ENCODE measurements at regions of chr12 and their contacts with region 1.

Region 1: GRCh38 chr12:31536672-31537071 is 54.3 kb downstream of the DENND5B start:
- DNase-seq: no peak
- ATAC-seq: no peak
- H3K4me3 ChIP-seq: no peak overlapping the region
- H3K4me3 Mint-ChIP-seq: no peak overlapping the region
- H3K27ac ChIP-seq: no peak overlapping the region
- H3K27ac Mint-ChIP-seq: no peak overlapping the region
- H3K4me1 ChIP-seq: peaks cover 12 to 14% of the 10 kb centered on the region in 2 donors
- H3K4me1 Mint-ChIP-seq: peaks cover 78% of the 10 kb centered on the region
- H3K27me3 ChIP-seq: no peaks in the 10 kb centered on the region
- H3K27me3 Mint-ChIP-seq: no peaks in the 10 kb centered on the region
- CTCF ChIP-seq: no peak

Region 2: DNA sequence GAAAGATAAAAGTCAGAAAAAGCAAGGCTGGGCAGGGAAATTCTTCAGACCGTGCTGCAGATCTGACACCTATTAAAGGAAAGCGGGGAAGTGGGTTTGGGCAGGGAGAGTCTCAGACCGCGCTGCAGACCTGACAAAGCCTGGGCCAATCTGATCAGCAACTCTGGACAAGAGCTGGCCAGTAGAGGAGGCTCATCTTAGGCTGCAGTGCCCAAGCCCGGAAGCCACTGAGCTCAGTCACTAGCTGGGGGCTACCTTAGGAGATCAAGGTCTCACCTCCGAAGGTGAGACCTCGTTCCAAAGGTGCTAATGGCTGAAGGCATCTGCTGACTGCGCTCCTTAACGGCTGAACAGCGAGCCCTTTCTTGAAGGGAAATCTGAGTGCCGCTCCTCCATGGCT is 270.9 kb before region 1 on chr12:
- CTCF ChIA-PET with region 1: no interaction called
- POLR2A ChIA-PET with region 1: no interaction called
- intact Hi-C with region 1: no loop called
- DNase-seq: no peak
- ATAC-seq: no peak
- H3K4me3 ChIP-seq: no peak overlapping the region
- H3K4me3 Mint-ChIP-seq: no peak overlapping the region
- H3K27ac ChIP-seq: no peak overlapping the region
- H3K27ac Mint-ChIP-seq: no peak overlapping the region
- H3K4me1 ChIP-seq: no peaks in the 10 kb centered on the region
- H3K4me1 Mint-ChIP-seq: no peaks in the 10 kb centered on the region
- H3K27me3 ChIP-seq: no peaks in the 10 kb centered on the region
- H3K27me3 Mint-ChIP-seq: no peaks in the 10 kb centered on the region
- CTCF ChIP-seq: no peak

Region 3: DNA sequence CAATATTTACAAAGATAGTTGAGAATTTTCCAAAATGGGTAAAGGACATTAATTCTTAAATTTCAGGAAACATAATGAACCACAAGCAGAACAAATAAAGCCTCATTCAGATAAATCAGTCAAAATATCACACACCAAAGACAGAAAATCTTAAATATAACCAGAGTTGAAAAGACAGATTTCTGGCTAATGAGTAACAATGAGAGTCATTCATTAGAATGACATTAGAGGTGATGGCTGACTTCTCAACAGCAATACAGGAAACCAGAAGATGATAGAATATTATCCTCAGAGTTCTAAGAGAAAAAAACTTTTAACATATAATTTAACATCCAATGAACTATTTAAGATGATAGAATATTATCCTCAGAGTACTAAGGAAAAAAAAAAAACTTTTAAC is 69.9 kb before region 1 on chr12:
- CTCF ChIA-PET with region 1: no interaction called
- POLR2A ChIA-PET with region 1: no interaction called
- intact Hi-C with region 1: no loop called
- DNase-seq: no peak
- ATAC-seq: no peak
- H3K4me3 ChIP-seq: no peak overlapping the region
- H3K4me3 Mint-ChIP-seq: no peak overlapping the region
- H3K27ac ChIP-seq: no peak overlapping the region
- H3K27ac Mint-ChIP-seq: no peak overlapping the region
- H3K4me1 ChIP-seq: no peaks in the 10 kb centered on the region
- H3K4me1 Mint-ChIP-seq: peaks cover 1% of the 10 kb centered on the region
- H3K27me3 ChIP-seq: no peaks in the 10 kb centered on the region
- H3K27me3 Mint-ChIP-seq: no peaks in the 10 kb centered on the region
- CTCF ChIP-seq: no peak

Region 4: GRCh38 chr12:31589904-31590641 is 53.4 kb after region 1 on chr12:
- CTCF ChIA-PET with region 1: no interaction called
- POLR2A ChIA-PET with region 1: no interaction called
- intact Hi-C with region 1: loop called (anchors 10 kb)
- DNase-seq: peak; percentile 78
- ATAC-seq: peak; percentile 29
- H3K4me3 ChIP-seq: peak overlapping the region; percentile 65 to 95 (median 78)
- H3K4me3 Mint-ChIP-seq: peak overlapping the region; percentile 96
- H3K27ac ChIP-seq: peak overlapping the region; percentile 85 to 94
- H3K27ac Mint-ChIP-seq: peak overlapping the region; percentile 99
- H3K4me1 ChIP-seq: peaks cover 49 to 56% of the 10 kb centered on the region in 2 donors
- H3K4me1 Mint-ChIP-seq: peaks cover 59% of the 10 kb centered on the region
- H3K27me3 ChIP-seq: no peaks in the 10 kb centered on the region
- H3K27me3 Mint-ChIP-seq: no peaks in the 10 kb centered on the region
- CTCF ChIP-seq: no peak

Region 5: GRCh38 chr12:31629756-31630732 is 93.4 kb after region 1 on chr12:
- CTCF ChIA-PET with region 1: no interaction called
- POLR2A ChIA-PET with region 1: no interaction called
- intact Hi-C with region 1: loop called (anchors 10 kb)
- DNase-seq: no peak
- ATAC-seq: no peak
- H3K4me3 ChIP-seq: no peak overlapping the region
- H3K4me3 Mint-ChIP-seq: no peak overlapping the region
- H3K27ac ChIP-seq: no peak overlapping the region
- H3K27ac Mint-ChIP-seq: no peak overlapping the region
- H3K4me1 ChIP-seq: peaks cover 13% of the 10 kb centered on the region in 2 donors
- H3K4me1 Mint-ChIP-seq: peaks cover 29% of the 10 kb centered on the region
- H3K27me3 ChIP-seq: no peaks in the 10 kb centered on the region
- H3K27me3 Mint-ChIP-seq: no peaks in the 10 kb centered on the region
- CTCF ChIP-seq: no peak